Endothelial cell of umbilical vein (primary cell): ENCODE measurements at regions of chr2 and their contacts with region 1.

Region 1: GRCh38 chr2:10659898-10660568 is 29.7 kb downstream of the NOL10 start:
- DNase-seq: peak; percentile 74
- H3K4me3 ChIP-seq: no peak overlapping the region
- H3K27ac ChIP-seq: no peak overlapping the region
- H3K4me1 ChIP-seq: peaks cover 4% of the 10 kb centered on the region
- H3K27me3 ChIP-seq: no peaks in the 10 kb centered on the region
- CTCF ChIP-seq: peak; percentile 79 to 81
- POLR2A ChIP-seq: no peak

Region 2: GRCh38 chr2:10267551-10268465 is 392.2 kb before region 1 on chr2:
- CTCF ChIA-PET with region 1: no interaction called
- POLR2A ChIA-PET with region 1: no interaction called
- dilution Hi-C with region 1: no loop called
- intact Hi-C with region 1: loop called (anchors 5 kb)
- DNase-seq: no peak
- H3K4me3 ChIP-seq: no peak overlapping the region
- H3K27ac ChIP-seq: no peak overlapping the region
- H3K4me1 ChIP-seq: peaks cover 3% of the 10 kb centered on the region
- H3K27me3 ChIP-seq: no peaks in the 10 kb centered on the region
- CTCF ChIP-seq: no peak
- POLR2A ChIP-seq: no peak

Region 3: GRCh38 chr2:10448208-10448645 is 211.8 kb before region 1 on chr2 and contains the start of gene ODC1:
- CTCF ChIA-PET with region 1: interaction called, 52 read pairs
- POLR2A ChIA-PET with region 1: interaction called, 4 read pairs
- dilution Hi-C with region 1: no loop called
- intact Hi-C with region 1: loop called (anchors 1 kb)
- DNase-seq: peak; percentile 83
- H3K4me3 ChIP-seq: peak within 1 kb of the TSS; percentile 71 to 94 (median 88)
- H3K27ac ChIP-seq: peak within 1 kb of the TSS; percentile 88
- H3K4me1 ChIP-seq: peaks cover 28% of the 10 kb centered on the region
- H3K27me3 ChIP-seq: no peaks in the 10 kb centered on the region
- CTCF ChIP-seq: no peak
- POLR2A ChIP-seq: peak; percentile 64
- total RNA-seq, gene ODC1: 104 and 109 TPM in 2 replicates

Region 4: GRCh38 chr2:10467401-10467800 is 192.6 kb before region 1 on chr2:
- CTCF ChIA-PET with region 1: interaction called, 7 read pairs
- POLR2A ChIA-PET with region 1: no interaction called
- dilution Hi-C with region 1: no loop called
- intact Hi-C with region 1: loop called (anchors 1 kb)
- DNase-seq: no peak
- H3K4me3 ChIP-seq: no peak overlapping the region
- H3K27ac ChIP-seq: no peak overlapping the region
- H3K4me1 ChIP-seq: no peaks in the 10 kb centered on the region
- H3K27me3 ChIP-seq: peaks cover 2 to 3% of the 10 kb centered on the region in 2 experiments
- CTCF ChIP-seq: peak in 1 of 2 donors; percentile 24
- POLR2A ChIP-seq: no peak

Region 5: GRCh38 chr2:10548626-10549025 is 111.4 kb before region 1 on chr2:
- CTCF ChIA-PET with region 1: no interaction called
- POLR2A ChIA-PET with region 1: no interaction called
- dilution Hi-C with region 1: no loop called
- intact Hi-C with region 1: loop called (anchors 5 kb)
- DNase-seq: peak; percentile 52
- H3K4me3 ChIP-seq: no peak overlapping the region
- H3K27ac ChIP-seq: no peak overlapping the region
- H3K4me1 ChIP-seq: peaks cover 10% of the 10 kb centered on the region
- H3K27me3 ChIP-seq: no peaks in the 10 kb centered on the region
- CTCF ChIP-seq: peak in 1 of 2 donors; percentile 9
- POLR2A ChIP-seq: no peak

Region 6: DNA sequence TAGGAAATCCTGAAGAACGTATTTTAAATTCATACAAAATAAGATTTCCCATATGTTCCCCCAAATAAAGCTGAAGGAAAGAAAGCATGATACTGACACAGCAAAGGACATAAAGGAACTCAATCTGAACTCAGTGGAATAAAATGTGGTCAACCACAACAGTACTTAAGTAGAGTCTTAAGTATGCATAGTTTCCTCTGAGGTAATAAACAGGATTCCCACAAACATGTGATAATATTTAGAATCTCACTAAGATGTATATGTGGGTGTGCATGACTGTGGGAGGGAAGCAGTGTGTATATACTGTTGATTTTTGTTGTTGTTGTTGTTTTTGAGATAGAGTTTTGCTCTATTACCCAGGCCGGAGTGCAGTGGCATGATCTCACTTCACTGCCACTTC is 39.6 kb before region 1 on chr2:
- CTCF ChIA-PET with region 1: no interaction called
- POLR2A ChIA-PET with region 1: no interaction called
- dilution Hi-C with region 1: no loop called
- intact Hi-C with region 1: no loop called
- DNase-seq: no peak
- H3K4me3 ChIP-seq: no peak overlapping the region
- H3K27ac ChIP-seq: no peak overlapping the region
- H3K4me1 ChIP-seq: peaks cover 3% of the 10 kb centered on the region
- H3K27me3 ChIP-seq: no peaks in the 10 kb centered on the region
- CTCF ChIP-seq: no peak
- POLR2A ChIP-seq: no peak